ENCODE measurements at regions of chr3 and their contacts with region 1.

Region 1: GRCh38 chr3:155870133-155870944 is at the start of gene GMPS:
- DNase-seq: peak; percentile 76
- ATAC-seq: peak; percentile 89
- H3K4me3 ChIP-seq: peak within 1 kb of the TSS; percentile 87 to 98
- H3K27ac ChIP-seq: peak within 1 kb of the TSS; percentile 90
- H3K4me1 ChIP-seq: peaks cover 0 to 25% of the 10 kb centered on the region in 2 experiments; a peak in 3 of 4 replicates
- H3K27me3 ChIP-seq: no peaks in the 10 kb centered on the region
- CTCF ChIP-seq: peak; percentile 5 to 26 (median 22); a peak in 1 of 6 replicates
- POLR2A ChIP-seq: peak; percentile 37
- RAD21 ChIP-seq: peak; percentile 67
- total RNA-seq, gene GMPS: 119 TPM

Region 2: GRCh38 chr3:155350571-155350970 is 519.8 kb before region 1 on chr3:
- CTCF ChIA-PET with region 1: no interaction called
- POLR2A ChIA-PET with region 1: no interaction called
- RAD21 ChIA-PET with region 1: no interaction called
- intact Hi-C with region 1: no loop called
- DNase-seq: no peak
- ATAC-seq: no peak
- H3K4me3 ChIP-seq: no peak overlapping the region
- H3K27ac ChIP-seq: no peak overlapping the region
- H3K4me1 ChIP-seq: no peaks in the 10 kb centered on the region
- H3K27me3 ChIP-seq: no peaks in the 10 kb centered on the region
- CTCF ChIP-seq: no peak
- POLR2A ChIP-seq: no peak
- RAD21 ChIP-seq: no peak

Region 3: DNA sequence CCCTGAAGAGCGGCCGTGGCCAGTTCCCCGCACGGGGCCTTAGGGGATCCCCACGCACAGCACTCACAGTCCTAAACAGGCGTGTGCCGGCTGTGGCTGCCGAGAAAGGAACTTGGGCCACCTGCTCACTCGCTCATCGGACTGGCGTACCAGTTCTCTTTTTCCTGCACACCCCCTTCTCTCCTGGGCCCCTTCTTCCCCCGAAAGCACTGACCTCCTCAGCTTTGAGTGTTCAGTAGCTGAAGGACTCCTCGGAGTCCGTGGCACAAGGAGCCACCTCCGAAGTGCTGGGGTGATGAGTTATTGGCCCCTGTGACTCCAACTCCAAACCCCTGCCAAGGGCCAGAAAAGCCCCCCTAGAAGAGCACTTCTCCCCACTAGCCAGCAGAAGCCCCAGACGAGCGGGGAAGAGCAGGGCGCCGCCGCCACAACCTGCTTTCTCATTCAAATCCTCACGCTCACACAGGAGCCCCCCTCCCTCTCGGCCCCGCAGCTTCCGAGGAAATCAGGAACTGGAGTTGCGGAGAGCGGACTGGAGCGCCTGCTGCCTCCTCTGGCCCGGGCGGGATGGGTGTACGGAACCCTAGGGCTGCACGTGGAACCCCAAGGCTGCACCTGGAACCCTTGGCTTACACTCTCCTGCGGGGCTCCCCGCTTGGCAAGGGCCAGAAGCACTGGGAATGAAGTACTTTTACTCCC is 125.6 kb before region 1 on chr3 and contains the start of gene PLCH1:
- CTCF ChIA-PET with region 1: no interaction called
- POLR2A ChIA-PET with region 1: no interaction called
- RAD21 ChIA-PET with region 1: interaction called in 1 of 2 experiments, 3 read pairs
- intact Hi-C with region 1: loop called (anchors 5 kb)
- DNase-seq: peak; percentile 62
- ATAC-seq: peak; percentile 78
- H3K4me3 ChIP-seq: peak within 1 kb of the TSS; percentile 79 to 83
- H3K27ac ChIP-seq: peak within 1 kb of the TSS; percentile 48
- H3K4me1 ChIP-seq: peaks cover 15 to 46% of the 10 kb centered on the region in 2 experiments
- H3K27me3 ChIP-seq: no peaks in the 10 kb centered on the region
- CTCF ChIP-seq: no peak
- POLR2A ChIP-seq: no peak
- RAD21 ChIP-seq: no peak
- total RNA-seq, gene PLCH1: 3.8 TPM

Measured in HCT116 (cell line).